ENCODE measurements at regions of chr10 and their contacts with region 1.

Region 1: GRCh38 chr10:4131407-4132228 is 346.6 kb upstream of the KLF6 start:
- DNase-seq: peak; percentile 49
- H3K4me3 Mint-ChIP-seq: no peak overlapping the region
- H3K27ac Mint-ChIP-seq: no peak overlapping the region
- H3K4me1 Mint-ChIP-seq: peaks cover 26% of the 10 kb centered on the region
- H3K27me3 Mint-ChIP-seq: no peaks in the 10 kb centered on the region

Region 2: GRCh38 chr10:3095373-3096139 is 1036.1 kb before region 1 on chr10:
- intact Hi-C with region 1: loop called (anchors 10 kb)
- DNase-seq: peak; percentile 57
- H3K4me3 Mint-ChIP-seq: peak overlapping the region; percentile 69
- H3K27ac Mint-ChIP-seq: peak overlapping the region; percentile 97
- H3K4me1 Mint-ChIP-seq: peaks cover 70% of the 10 kb centered on the region
- H3K27me3 Mint-ChIP-seq: no peaks in the 10 kb centered on the region

Region 3: DNA sequence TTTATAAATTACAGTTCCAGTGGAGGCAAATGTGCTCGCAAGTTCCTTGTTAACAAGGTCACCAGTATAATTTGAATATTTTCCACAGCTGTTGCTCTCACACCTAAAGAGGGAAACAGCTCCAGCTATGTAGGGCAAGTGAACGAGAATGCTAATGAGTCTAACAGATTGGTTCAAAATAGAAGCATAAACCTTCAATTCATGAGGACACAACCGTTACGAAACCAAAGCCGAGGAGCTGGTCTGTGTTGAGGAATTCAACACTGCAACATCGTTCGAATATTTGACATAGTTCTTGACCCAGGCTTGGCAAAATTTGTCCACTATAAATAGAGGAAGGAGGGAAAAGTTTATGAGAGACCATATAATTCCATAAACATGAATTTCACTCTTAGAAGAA is 507.9 kb before region 1 on chr10:
- intact Hi-C with region 1: loop called (anchors 1 kb)
- DNase-seq: no peak
- H3K4me3 Mint-ChIP-seq: no peak overlapping the region
- H3K27ac Mint-ChIP-seq: peak overlapping the region; percentile 89
- H3K4me1 Mint-ChIP-seq: peaks cover 35% of the 10 kb centered on the region
- H3K27me3 Mint-ChIP-seq: peaks cover 8% of the 10 kb centered on the region

Region 4: GRCh38 chr10:3828404-3829155 is 303.0 kb before region 1 on chr10:
- intact Hi-C with region 1: loop called (anchors 5 kb)
- DNase-seq: no peak
- H3K4me3 Mint-ChIP-seq: peak overlapping the region; percentile 58
- H3K27ac Mint-ChIP-seq: peak overlapping the region; percentile 93
- H3K4me1 Mint-ChIP-seq: peaks cover 57% of the 10 kb centered on the region
- H3K27me3 Mint-ChIP-seq: no peaks in the 10 kb centered on the region

Region 5: DNA sequence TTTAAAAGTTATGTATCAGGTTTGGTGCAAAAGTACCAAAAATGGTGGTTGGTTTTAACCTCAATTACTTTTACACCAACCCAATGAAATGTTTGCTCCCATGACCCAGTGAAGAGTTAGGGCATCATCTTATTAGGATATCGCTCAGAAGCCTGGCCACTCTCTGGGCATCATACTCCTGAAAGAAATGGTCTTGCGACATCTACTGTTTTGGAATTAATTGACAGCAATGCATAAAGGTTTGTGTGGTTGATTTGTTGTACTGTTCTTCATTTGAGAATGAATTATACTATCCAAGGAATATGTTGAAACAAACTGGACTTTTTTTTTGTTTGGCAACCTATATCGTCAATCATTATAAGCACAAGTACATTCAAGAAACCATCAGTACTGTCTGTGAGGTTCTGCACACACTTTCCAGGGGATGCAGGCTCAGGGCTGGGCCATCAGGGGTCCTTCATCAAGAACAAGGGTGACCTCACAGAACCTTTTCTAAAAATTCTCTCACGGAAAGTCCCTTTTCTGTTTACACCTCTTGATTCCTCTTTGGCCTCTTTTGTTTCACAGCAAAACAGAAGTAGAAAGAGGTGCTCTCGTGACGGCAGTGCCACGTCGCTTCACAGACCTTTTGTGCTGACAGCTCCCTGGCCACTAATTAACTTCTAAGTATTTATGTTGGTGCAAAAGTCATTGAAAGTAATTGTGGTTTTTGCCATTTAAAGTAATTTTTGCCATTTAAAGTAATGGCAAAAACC is 229.4 kb before region 1 on chr10:
- intact Hi-C with region 1: loop called (anchors 1 kb)
- DNase-seq: peak; percentile 47
- H3K4me3 Mint-ChIP-seq: peak overlapping the region; percentile 22
- H3K27ac Mint-ChIP-seq: peak overlapping the region; percentile 93
- H3K4me1 Mint-ChIP-seq: peaks cover 38% of the 10 kb centered on the region
- H3K27me3 Mint-ChIP-seq: no peaks in the 10 kb centered on the region

Region 6: GRCh38 chr10:4034907-4035598 is 96.6 kb before region 1 on chr10:
- intact Hi-C with region 1: loop called (anchors 1 kb)
- DNase-seq: peak; percentile 11
- H3K4me3 Mint-ChIP-seq: peak overlapping the region; percentile 61
- H3K27ac Mint-ChIP-seq: peak overlapping the region; percentile 66
- H3K4me1 Mint-ChIP-seq: peaks cover 36% of the 10 kb centered on the region
- H3K27me3 Mint-ChIP-seq: no peaks in the 10 kb centered on the region

Region 7: DNA sequence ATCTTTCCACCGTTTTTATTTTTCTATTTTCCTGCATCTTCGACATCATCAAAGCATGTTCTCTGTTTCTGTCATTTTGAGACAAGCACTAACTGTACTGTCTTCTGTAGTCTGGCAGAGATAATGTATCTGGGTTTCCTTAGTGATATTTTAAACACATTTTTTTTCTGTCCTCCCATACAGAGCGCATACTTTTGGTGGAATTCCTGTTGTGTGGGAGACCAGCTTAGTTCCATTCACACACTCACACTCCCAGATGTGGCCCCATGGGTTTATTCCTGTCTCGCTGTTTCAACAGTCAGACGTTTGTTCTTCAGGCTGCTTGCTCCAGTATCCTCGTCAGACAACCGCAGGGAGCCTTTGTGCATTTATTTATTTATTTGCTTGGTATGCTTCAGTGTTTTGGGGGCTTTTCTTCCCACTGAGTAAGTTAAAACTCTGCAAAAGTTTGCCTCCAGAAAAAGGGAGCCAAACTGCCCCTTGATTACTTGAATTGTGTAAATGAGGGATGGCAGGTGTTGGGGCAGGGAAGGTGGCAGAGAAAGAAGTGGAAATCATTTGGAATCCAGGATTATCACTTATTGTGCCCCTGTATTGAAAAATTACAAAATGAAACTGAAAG is 110.2 kb after region 1 on chr10:
- intact Hi-C with region 1: loop called (anchors 2 kb)
- DNase-seq: no peak
- H3K4me3 Mint-ChIP-seq: no peak overlapping the region
- H3K27ac Mint-ChIP-seq: no peak overlapping the region
- H3K4me1 Mint-ChIP-seq: peaks cover 43% of the 10 kb centered on the region
- H3K27me3 Mint-ChIP-seq: peaks cover 2% of the 10 kb centered on the region

Region 8: GRCh38 chr10:4804465-4804864 is 672.8 kb after region 1 on chr10:
- intact Hi-C with region 1: no loop called
- DNase-seq: no peak
- H3K4me3 Mint-ChIP-seq: no peak overlapping the region
- H3K27ac Mint-ChIP-seq: no peak overlapping the region
- H3K4me1 Mint-ChIP-seq: no peaks in the 10 kb centered on the region
- H3K27me3 Mint-ChIP-seq: peaks cover 21% of the 10 kb centered on the region